PC-9 (cell line): ENCODE measurements at regions of chrX and their contacts with region 1.

Region 1: DNA sequence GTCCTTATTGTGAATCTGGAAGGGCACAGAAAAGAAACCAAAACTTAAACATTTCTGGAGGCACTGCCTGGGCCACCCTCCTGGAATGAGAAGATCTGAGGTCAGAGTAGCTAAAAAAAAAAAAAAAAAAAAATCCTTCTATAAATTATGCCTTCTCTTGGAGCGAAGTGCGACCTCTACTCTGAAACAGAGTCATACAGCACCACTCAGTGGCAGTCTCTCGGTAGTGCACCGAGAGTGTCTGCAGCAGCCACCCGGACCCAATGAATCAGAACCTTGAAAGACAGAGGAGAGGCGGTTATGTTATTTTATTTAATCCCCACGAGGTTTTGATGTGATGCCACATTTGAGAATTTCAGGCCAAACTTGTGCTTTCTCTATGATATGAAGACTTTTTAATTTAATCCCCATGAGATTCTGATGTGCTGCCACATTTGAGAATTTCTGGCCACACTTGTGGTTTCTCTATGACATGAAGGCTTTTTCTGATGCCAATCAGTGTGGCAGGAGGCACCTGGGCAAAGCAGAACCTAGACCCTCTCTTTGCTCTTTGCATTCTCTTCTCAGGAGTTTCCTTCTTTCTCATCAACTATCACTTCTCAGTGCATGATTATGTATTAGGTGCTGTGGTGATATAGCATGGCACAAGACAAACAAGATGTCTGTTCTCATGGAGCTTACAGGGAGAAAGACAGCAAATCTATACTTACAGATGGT is 5.6 kb upstream of the CT47C1 start:
- DNase-seq: peak; percentile 52 to 71
- H3K4me3 ChIP-seq: no peak overlapping the region
- H3K27ac ChIP-seq: no peak overlapping the region
- H3K4me1 ChIP-seq: no peaks in the 10 kb centered on the region
- H3K27me3 ChIP-seq: peaks cover 5% of the 10 kb centered on the region; the same call in 1 of the 2 replicates
- CTCF ChIP-seq: peak; percentile 93

Region 2: DNA sequence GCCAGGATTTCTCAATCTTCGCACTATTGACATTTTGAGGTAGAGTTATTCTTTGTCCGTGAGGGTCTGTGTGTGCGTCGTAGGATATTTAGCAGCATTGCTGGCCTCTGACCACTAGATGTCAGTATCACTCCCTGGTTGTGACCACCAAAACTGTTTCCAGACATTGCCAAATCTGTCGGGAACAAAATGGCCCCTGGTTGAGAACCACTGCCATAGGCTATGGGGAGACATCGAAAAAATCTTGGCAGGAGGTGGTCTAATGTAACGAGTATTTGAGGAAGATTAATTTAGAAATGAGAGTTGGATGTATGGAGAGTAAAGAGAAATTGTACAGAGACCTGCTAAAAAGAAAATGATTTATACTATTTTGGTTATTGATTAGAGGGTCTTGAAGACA is 463.2 kb before region 1 on chrX:
- CTCF ChIA-PET with region 1: interaction called, 5 read pairs
- POLR2A ChIA-PET with region 1: no interaction called
- intact Hi-C with region 1: loop called (anchors 2 kb)
- DNase-seq: peak; percentile 33 to 35
- H3K4me3 ChIP-seq: no peak overlapping the region
- H3K27ac ChIP-seq: no peak overlapping the region
- H3K4me1 ChIP-seq: 0 out of 2 replicates have a peak, but pooled peaks cover 7% of the 10 kb centered on the region
- H3K27me3 ChIP-seq: no peaks in the 10 kb centered on the region
- CTCF ChIP-seq: peak; percentile 87

Region 3: DNA sequence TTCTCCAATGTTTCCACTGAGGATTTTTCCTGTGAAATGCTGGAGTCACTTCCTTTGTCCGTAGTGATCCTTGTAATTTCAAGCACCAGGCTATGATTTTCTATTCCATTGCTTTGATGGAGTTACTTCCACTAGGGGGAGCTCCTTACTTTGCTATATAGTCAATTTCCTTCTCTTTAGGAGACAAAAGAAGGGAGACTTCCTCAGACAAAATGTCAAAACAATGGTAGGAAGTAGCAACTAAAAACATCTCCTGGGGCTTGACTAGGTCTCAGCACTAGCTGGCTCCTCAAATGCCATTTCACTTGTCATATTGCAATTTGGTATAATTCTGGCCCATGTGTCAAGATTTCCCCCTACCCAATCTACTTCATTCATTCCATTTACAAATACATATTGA is 219.5 kb before region 1 on chrX:
- CTCF ChIA-PET with region 1: interaction called, 18 read pairs
- POLR2A ChIA-PET with region 1: no interaction called
- intact Hi-C with region 1: loop called (anchors 1 kb)
- DNase-seq: peak in 1 of 2 experiments; percentile 59
- H3K4me3 ChIP-seq: no peak overlapping the region
- H3K27ac ChIP-seq: no peak overlapping the region
- H3K4me1 ChIP-seq: no peaks in the 10 kb centered on the region
- H3K27me3 ChIP-seq: no peaks in the 10 kb centered on the region
- CTCF ChIP-seq: peak; percentile 85

Region 4: DNA sequence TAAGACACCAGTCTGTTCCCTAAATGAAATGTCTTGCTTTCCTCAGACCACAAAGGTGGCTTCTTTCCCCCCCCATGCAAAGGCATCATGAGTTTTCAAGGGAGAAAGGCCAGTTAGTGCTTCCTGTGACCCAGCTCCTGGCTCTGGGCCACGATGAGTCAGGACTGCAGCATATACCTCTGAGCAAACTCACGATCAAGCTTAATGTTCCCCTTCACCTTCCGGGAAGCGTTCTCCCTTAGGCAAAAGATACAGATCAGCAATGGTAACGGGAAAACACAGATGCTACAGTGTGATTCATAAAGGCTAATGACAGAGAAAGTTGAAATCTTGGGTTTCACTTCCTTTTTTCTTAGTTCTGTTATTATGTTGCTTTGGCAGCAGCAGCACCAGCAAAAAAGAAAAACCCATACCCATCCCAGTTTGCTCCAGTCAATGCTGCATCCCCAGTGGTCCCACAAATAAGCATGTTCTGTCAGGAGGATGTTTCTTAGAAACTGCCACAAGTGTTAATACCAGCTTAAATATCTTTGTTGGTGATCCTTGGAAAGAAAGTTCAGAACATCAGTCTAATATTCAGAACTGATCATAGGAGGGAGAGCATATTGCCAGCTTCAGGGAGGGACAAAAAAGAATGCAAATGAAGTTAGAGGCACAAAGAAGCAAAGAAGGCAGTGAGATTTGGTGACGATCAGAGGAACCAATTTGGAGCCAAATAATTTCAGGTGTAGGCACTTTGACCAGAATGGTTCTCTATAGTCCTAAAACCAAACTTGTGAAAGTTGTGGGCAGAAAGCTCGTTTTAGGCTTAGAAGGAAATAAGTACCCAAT is 51.6 kb before region 1 on chrX:
- CTCF ChIA-PET with region 1: interaction called, 25 read pairs
- POLR2A ChIA-PET with region 1: no interaction called
- intact Hi-C with region 1: no loop called
- DNase-seq: peak; percentile 86 to 98
- H3K4me3 ChIP-seq: no peak overlapping the region
- H3K27ac ChIP-seq: peak overlapping the region; percentile 87
- H3K4me1 ChIP-seq: peaks cover 39% of the 10 kb centered on the region
- H3K27me3 ChIP-seq: no peaks in the 10 kb centered on the region
- CTCF ChIP-seq: no peak

Region 5: GRCh38 chrX:119222932-119223331 is 155.8 kb after region 1 on chrX:
- CTCF ChIA-PET with region 1: interaction called, 6 read pairs
- POLR2A ChIA-PET with region 1: no interaction called
- intact Hi-C with region 1: loop called (anchors 1 kb)
- DNase-seq: no peak
- H3K4me3 ChIP-seq: no peak overlapping the region
- H3K27ac ChIP-seq: no peak overlapping the region
- H3K4me1 ChIP-seq: no peaks in the 10 kb centered on the region
- H3K27me3 ChIP-seq: no peaks in the 10 kb centered on the region
- CTCF ChIP-seq: no peak